PC-9 (cell line): ENCODE measurements at regions of chr15 and their contacts with region 1.

Region 1: DNA sequence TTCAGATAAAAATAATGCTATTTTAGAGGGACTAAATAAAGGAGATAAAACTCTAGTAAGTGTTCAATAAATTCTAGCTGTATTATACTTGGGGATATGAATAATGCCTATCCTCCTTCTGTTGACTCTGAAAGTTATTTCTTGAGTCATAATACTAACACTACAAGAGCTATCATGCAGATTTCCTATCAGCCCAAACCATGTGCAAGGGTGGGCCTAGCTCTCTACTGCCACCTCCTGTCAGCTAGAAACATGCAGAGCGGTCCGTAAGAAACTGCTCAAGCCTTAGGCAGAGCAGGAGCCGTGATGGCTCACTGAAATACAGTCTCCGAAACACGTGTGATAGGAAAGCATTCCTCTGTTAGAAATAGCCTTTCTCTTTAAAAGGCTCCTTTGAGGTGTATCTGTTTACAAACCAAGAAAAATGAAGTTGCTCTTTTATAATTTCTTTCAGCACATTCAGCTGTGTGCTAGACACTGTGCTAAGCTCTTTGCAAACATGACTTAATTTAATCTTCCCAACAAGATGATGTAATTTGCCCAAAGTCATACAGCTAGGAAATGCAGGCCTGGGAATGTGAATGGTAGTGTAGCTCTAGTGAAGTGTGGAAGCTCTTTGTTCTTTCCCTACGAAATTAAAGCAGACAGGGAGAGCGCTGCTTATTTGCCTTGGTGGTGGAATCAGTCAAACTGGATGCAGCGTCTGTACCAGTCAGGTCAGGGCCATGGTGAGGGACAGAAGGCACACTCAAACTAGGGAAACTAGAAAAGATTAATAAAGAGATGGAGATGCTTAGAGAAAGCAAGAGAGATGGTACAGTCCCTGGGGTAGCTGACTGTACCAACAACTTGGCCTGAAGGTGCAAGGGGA is 43.1 kb downstream of the MTHFS start:
- DNase-seq: peak; percentile 45 to 53
- H3K4me3 ChIP-seq: no peak overlapping the region
- H3K27ac ChIP-seq: no peak overlapping the region
- H3K4me1 ChIP-seq: no peaks in the 10 kb centered on the region
- H3K27me3 ChIP-seq: no peaks in the 10 kb centered on the region
- CTCF ChIP-seq: peak; percentile 83

Region 2: GRCh38 chr15:79596051-79596507 is 257.6 kb before region 1 on chr15:
- CTCF ChIA-PET with region 1: no interaction called
- POLR2A ChIA-PET with region 1: no interaction called
- intact Hi-C with region 1: loop called (anchors 1 kb)
- DNase-seq: peak; percentile 55 to 78
- H3K4me3 ChIP-seq: no peak overlapping the region
- H3K27ac ChIP-seq: no peak overlapping the region
- H3K4me1 ChIP-seq: no peaks in the 10 kb centered on the region
- H3K27me3 ChIP-seq: peaks cover 62% of the 10 kb centered on the region
- CTCF ChIP-seq: peak; percentile 91

Region 3: DNA sequence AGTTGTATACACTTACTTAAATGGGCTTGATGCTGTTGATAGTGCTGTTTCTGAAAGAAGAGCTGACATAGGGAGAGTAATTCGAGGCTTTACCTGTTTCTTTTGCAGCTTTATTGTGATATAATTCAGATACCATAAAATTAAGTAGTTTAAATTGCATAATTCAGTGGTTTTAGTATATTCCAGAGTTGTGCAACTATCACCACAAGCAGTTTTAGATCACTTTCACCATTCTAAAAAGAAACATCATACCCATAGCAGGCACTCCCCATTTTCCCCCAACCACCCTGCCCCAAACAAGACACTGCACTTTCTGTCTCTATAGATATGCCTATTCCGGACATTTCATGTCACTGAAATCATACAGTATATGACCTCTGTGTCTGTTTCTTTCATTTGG is 55.4 kb before region 1 on chr15:
- CTCF ChIA-PET with region 1: no interaction called
- POLR2A ChIA-PET with region 1: no interaction called
- intact Hi-C with region 1: no loop called
- DNase-seq: no peak
- H3K4me3 ChIP-seq: no peak overlapping the region
- H3K27ac ChIP-seq: no peak overlapping the region
- H3K4me1 ChIP-seq: no peaks in the 10 kb centered on the region
- H3K27me3 ChIP-seq: 0 out of 2 replicates have a peak, but pooled peaks cover 4% of the 10 kb centered on the region
- CTCF ChIP-seq: no peak

Region 4: GRCh38 chr15:79978655-79979514 is 125.2 kb after region 1 on chr15:
- CTCF ChIA-PET with region 1: no interaction called
- POLR2A ChIA-PET with region 1: no interaction called
- intact Hi-C with region 1: no loop called
- DNase-seq: no peak
- H3K4me3 ChIP-seq: no peak overlapping the region
- H3K27ac ChIP-seq: no peak overlapping the region
- H3K4me1 ChIP-seq: no peaks in the 10 kb centered on the region
- H3K27me3 ChIP-seq: no peaks in the 10 kb centered on the region
- CTCF ChIP-seq: no peak

Region 5: DNA sequence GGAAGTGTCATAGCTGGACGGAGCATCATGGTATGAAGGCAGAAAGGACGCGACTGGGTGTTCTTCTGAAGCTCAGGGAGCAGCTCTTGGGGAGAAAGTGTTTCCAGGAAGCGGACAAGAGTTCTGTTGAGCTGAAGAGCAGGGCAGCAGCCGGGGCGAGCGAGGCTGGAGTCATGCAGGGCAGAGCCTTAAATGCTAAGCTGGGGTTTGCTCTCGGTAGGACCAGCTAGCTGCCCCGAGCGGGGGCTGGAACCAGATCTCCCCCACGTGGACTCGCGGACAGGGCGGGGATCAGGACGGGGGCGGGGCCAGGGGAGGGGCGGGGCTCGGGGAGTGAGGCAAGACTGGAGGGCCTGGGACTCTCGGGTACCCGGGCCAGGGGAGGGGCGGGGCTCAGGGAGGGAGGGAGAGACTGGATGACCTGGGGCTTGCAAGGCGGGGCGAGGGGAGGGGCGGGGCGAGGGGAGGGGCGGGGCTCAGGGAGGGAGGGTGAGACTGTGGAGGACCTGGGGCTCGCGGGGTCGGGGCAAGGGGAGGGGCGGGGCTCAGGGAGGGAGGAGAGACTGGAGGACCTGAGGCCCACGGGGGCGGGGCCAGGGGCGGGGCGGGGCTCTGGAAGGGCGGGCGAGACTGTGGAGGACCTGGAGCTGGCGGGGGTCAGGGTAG is 298.6 kb after region 1 on chr15:
- CTCF ChIA-PET with region 1: no interaction called
- POLR2A ChIA-PET with region 1: no interaction called
- intact Hi-C with region 1: no loop called
- DNase-seq: peak; percentile 79 to 81
- H3K4me3 ChIP-seq: peak overlapping the region; percentile 64
- H3K27ac ChIP-seq: peak overlapping the region; percentile 60
- H3K4me1 ChIP-seq: peaks cover 26% of the 10 kb centered on the region
- H3K27me3 ChIP-seq: no peaks in the 10 kb centered on the region
- CTCF ChIP-seq: no peak

Region 6: DNA sequence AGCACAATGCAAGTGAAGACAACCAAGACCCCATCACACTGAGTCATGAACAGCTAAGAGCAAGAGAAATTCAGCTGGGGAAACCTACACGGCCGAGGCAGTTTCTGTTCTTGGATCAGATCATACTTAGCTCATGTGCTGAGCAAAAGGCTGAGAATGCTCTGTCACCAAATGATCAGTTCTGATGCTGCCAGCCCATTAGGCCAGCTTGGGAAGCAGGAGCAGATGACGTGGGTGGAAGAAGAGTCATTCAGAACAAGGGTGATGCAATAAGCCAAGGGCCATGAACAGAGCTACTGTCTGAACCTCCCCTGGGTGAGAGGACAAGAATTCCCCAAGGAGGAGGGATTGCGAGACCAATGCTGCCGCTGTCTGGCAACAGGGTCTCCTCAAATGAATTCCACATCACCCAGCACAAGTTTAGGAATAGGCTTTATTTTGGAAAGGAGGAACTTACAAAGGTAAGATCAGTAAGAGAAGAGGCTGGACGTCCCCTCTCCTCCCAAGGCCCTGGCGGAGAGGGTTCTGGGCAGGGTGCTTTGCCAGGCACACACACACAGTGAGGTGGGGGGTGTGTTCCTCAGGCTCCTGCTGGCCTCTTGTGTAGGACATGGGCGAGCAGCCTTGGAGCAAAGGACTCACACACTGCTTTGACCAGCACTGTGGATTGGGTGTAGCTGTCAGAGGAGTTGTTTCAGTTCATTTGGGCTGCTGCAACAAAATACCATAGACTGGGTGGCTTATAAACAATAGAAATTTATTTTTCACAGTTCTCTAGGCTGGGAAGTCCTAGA is 463.9 kb after region 1 on chr15:
- CTCF ChIA-PET with region 1: no interaction called
- POLR2A ChIA-PET with region 1: no interaction called
- intact Hi-C with region 1: no loop called
- DNase-seq: no peak
- H3K4me3 ChIP-seq: no peak overlapping the region
- H3K27ac ChIP-seq: no peak overlapping the region
- H3K4me1 ChIP-seq: no peaks in the 10 kb centered on the region
- H3K27me3 ChIP-seq: no peaks in the 10 kb centered on the region
- CTCF ChIP-seq: no peak